Mammary epithelial cell (primary cell): ENCODE measurements at regions of chr9 and their contacts with region 1.

Region 1: DNA sequence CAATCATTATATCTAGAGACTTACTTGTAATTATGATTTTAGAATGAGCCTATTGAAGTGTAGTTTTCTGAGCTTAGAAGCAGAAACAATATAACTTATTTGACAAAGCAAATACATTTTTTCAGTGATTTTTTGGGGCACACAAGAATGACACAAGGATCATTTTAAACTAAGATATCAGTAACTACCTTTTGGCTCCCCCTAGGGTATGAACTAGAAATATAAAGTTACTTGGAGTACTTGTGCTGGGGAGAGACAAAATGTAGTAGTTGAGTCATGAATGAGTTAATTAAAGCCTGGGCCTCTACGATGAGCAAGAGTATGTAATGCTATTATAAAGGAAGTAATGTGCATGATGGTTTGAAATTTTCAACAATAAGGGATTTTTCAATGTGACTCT is 1244.1 kb upstream of the ACO1 start:
- DNase-seq: peak; percentile 68
- H3K4me3 ChIP-seq: no peak overlapping the region
- H3K27ac ChIP-seq: no peak overlapping the region
- H3K4me1 ChIP-seq: peaks cover 23% of the 10 kb centered on the region
- H3K27me3 ChIP-seq: no peaks in the 10 kb centered on the region
- CTCF ChIP-seq: peak; percentile 29 to 50

Region 2: GRCh38 chr9:31185831-31186230 is 45.5 kb after region 1 on chr9:
- CTCF ChIA-PET with region 1: no interaction called
- dilution Hi-C with region 1: no loop called
- in situ Hi-C with region 1: no loop called
- intact Hi-C with region 1: loop called (anchors 5 kb)
- DNase-seq: peak; percentile 96
- H3K4me3 ChIP-seq: no peak overlapping the region
- H3K27ac ChIP-seq: peak overlapping the region; percentile 71
- H3K4me1 ChIP-seq: peaks cover 26% of the 10 kb centered on the region
- H3K27me3 ChIP-seq: no peaks in the 10 kb centered on the region
- CTCF ChIP-seq: no peak

Region 3: DNA sequence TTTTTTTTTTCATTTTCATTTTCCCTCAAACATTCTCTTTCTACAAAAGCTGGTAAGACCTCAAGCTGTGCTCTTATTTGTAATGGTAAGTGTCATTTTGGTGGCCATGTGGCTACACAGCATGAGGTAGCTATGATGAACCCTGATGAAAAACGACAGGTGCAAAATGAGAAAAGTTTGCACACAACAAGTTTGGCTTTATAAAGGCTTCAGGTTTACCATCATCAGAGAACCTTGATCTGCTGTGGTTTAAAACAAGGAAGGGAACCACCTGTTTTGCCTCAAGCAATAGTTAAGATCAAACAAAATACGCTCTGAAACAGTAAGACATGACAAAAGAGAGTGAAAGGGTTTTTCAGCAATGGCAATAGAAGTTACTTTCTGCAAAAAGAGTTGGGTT is 119.5 kb after region 1 on chr9:
- CTCF ChIA-PET with region 1: no interaction called
- dilution Hi-C with region 1: no loop called
- in situ Hi-C with region 1: loop called in 1 of 2 experiments (anchors 25 kb)
- intact Hi-C with region 1: no loop called
- DNase-seq: no peak
- H3K4me3 ChIP-seq: no peak overlapping the region
- H3K27ac ChIP-seq: no peak overlapping the region
- H3K4me1 ChIP-seq: no peaks in the 10 kb centered on the region
- H3K27me3 ChIP-seq: no peaks in the 10 kb centered on the region
- CTCF ChIP-seq: no peak

Region 4: DNA sequence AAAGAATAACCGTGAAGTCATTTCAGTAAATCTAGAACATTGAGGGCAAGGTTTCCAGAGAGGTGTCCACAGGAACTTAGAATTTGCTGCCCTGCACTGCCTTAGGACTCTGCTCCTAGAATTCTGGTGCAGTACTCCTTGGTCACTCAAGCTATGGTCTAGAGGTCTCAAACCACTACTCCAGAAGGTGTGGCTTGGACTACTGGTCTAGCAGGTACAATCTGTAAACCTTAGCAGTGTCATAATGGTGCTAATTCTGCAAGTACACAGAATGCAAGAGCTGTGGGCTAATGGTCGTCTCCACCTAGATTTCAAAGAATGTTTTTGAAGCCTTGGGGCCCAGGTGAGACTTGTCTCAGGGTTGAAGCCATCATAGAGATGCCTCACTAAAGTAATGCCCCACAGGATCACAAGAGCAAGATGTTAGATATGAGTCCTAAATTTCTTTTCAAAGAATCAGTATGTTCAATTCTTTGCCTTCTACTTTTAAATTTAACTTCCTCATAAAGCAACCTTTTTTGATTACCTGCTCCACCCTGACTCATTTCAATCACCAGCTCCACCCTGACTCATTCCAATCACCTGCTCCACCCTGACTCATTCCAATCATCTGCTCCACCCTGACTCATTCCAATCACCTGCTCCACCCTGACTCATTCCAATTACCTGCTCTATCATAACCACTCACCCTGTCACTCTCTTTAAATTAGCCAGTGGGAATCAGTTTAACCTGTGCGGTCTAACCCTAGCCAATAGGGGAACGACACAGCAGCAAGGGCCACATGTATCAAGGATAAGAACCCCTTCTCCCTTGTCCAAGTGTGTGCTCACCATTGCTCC is 132.4 kb after region 1 on chr9:
- CTCF ChIA-PET with region 1: no interaction called
- dilution Hi-C with region 1: no loop called
- in situ Hi-C with region 1: loop called in 1 of 2 experiments (anchors 25 kb)
- intact Hi-C with region 1: loop called (anchors 5 kb)
- DNase-seq: peak; percentile 93
- H3K4me3 ChIP-seq: no peak overlapping the region
- H3K27ac ChIP-seq: peak overlapping the region; percentile 74
- H3K4me1 ChIP-seq: peaks cover 10% of the 10 kb centered on the region
- H3K27me3 ChIP-seq: no peaks in the 10 kb centered on the region
- CTCF ChIP-seq: no peak